IMR-90 (cell line): ENCODE measurements at regions of chr2 and their contacts with region 1.

Region 1: DNA sequence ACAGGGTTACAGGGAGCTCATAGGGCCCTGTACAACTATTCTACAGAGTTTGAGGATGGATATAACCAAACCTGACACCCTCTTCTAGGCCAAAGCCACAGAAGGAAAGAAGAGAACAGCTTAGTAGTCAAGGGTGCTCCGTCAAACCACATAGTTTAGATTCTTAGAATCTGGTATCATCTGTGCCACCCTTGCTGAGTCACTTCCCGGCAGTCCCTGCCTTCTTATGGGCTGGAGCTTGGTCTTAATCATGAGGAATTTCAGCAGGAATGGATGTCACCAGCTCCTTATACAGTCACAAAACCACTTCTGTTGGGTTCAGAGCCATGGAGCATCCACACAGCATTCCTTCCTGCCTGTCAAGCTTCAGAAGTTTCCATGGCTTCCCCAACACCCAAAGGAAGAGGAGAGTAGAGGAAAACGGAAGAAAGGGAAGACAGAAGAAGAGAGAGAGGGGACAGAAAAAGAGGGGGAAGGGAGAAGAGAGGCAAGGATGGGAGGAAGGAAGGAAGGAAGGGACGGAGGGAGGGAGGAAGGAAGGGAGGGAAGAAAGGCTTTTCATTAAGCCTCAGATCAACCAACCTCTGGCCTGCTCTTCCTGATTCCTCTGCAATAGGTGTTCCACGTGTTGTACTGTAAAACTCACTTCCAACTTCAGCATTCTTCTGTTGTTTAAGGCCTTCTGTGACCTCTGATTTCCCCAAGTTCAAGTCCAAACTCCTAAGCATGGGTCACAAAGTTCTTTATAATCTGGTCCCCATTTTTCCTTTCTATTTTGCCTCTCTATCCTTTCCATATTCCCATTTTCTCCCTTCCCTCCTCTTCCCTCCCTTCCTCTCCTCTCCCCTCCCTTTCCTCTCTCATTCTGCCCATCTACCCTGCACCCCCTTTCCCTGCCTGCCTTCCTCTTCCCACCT is 246.1 kb upstream of the TNP1 start:
- DNase-seq: peak; percentile 95
- ATAC-seq: peak; percentile 86
- H3K4me3 ChIP-seq: no peak overlapping the region
- H3K27ac ChIP-seq: peak overlapping the region; percentile 99
- H3K4me1 ChIP-seq: peaks cover 23% of the 10 kb centered on the region
- H3K27me3 ChIP-seq: no peaks in the 10 kb centered on the region
- CTCF ChIP-seq: no peak
- POLR2A ChIP-seq: peak; percentile 68; the same call in 1 of the 2 replicates
- RAD21 ChIP-seq: peak; percentile 11; the same call in 1 of the 2 replicates

Region 2: GRCh38 chr2:216615298-216616082 is 490.5 kb before region 1 on chr2:
- CTCF ChIA-PET with region 1: no interaction called
- POLR2A ChIA-PET with region 1: no interaction called
- dilution Hi-C with region 1: no loop called
- in situ Hi-C with region 1: no loop called
- intact Hi-C with region 1: no loop called
- DNase-seq: no peak
- ATAC-seq: no peak
- H3K4me3 ChIP-seq: no peak overlapping the region
- H3K27ac ChIP-seq: no peak overlapping the region
- H3K4me1 ChIP-seq: peaks cover 7% of the 10 kb centered on the region; the same call in 1 of the 2 replicates
- H3K27me3 ChIP-seq: peaks cover 22% of the 10 kb centered on the region
- CTCF ChIP-seq: no peak
- POLR2A ChIP-seq: no peak
- RAD21 ChIP-seq: no peak

Region 3: DNA sequence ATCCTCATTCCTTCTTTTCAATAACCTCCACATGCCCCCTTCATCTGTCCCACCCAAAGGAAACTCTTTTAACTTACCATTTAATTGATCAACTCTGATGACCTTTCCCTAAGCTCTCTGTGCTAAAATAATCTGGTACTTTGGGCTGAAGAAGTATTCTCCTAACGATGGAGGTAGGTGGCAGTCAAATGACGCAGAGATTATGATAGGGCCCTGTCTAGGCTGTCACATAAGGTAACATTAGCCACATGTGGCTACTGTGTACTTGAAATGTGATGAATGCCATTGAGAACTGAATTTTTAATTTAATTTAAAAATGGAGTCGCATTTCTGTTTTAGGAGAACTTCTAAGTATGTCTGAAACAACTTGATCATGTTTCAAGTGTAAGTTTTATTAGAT is 105.6 kb before region 1 on chr2:
- CTCF ChIA-PET with region 1: no interaction called
- POLR2A ChIA-PET with region 1: no interaction called
- dilution Hi-C with region 1: no loop called
- in situ Hi-C with region 1: no loop called
- intact Hi-C with region 1: no loop called
- DNase-seq: no peak
- ATAC-seq: no peak
- H3K4me3 ChIP-seq: no peak overlapping the region
- H3K27ac ChIP-seq: no peak overlapping the region
- H3K4me1 ChIP-seq: no peaks in the 10 kb centered on the region
- H3K27me3 ChIP-seq: no peaks in the 10 kb centered on the region; the same call in 1 of the 2 replicates
- CTCF ChIP-seq: no peak
- POLR2A ChIP-seq: no peak
- RAD21 ChIP-seq: no peak

Region 4: GRCh38 chr2:217064234-217065024 is 41.6 kb before region 1 on chr2:
- CTCF ChIA-PET with region 1: no interaction called
- POLR2A ChIA-PET with region 1: no interaction called
- dilution Hi-C with region 1: no loop called
- in situ Hi-C with region 1: no loop called
- intact Hi-C with region 1: loop called (anchors 2 kb)
- DNase-seq: no peak
- ATAC-seq: no peak
- H3K4me3 ChIP-seq: no peak overlapping the region
- H3K27ac ChIP-seq: peak overlapping the region; percentile 62
- H3K4me1 ChIP-seq: peaks cover 14% of the 10 kb centered on the region
- H3K27me3 ChIP-seq: no peaks in the 10 kb centered on the region
- CTCF ChIP-seq: no peak
- POLR2A ChIP-seq: no peak
- RAD21 ChIP-seq: no peak

Region 5: DNA sequence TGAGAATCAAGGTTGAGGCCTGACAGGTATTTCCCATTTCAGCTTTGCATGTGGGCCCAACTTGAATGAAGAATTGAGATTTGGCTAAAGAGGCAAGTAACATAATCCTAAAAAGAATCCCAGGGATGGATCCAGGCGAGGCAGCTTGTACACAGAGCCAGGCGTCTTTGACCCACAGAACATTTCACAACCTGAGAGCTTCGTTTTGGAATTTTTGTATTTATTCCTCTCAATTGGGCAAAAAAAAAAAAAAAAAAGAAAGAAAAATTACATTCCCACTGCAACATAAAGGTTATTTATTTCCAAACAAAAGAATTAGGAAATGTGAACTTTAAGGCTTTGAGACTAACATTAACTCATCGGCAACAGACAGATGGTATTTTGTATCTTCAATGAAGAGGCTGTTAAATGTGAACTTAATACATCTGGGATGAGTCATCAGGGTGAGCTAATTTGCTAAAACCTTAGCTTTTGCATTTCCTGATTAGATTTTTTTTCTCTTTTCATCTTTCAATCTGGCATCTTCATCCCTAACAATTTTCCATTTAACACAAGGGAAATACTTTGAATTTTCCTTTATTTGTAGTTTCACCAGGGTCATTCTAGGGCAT is 232.4 kb after region 1 on chr2:
- CTCF ChIA-PET with region 1: no interaction called
- POLR2A ChIA-PET with region 1: interaction called, 7 read pairs
- dilution Hi-C with region 1: no loop called
- in situ Hi-C with region 1: no loop called
- intact Hi-C with region 1: loop called (anchors 5 kb)
- DNase-seq: peak; percentile 96
- ATAC-seq: peak; percentile 73
- H3K4me3 ChIP-seq: no peak overlapping the region
- H3K27ac ChIP-seq: peak overlapping the region; percentile 100
- H3K4me1 ChIP-seq: peaks cover 12% of the 10 kb centered on the region
- H3K27me3 ChIP-seq: no peaks in the 10 kb centered on the region
- CTCF ChIP-seq: no peak
- POLR2A ChIP-seq: no peak
- RAD21 ChIP-seq: no peak